ENCODE measurements at regions of chr4 and their contacts with region 1.

Region 1: GRCh38 chr4:82648356-82648755 is 86.6 kb upstream of the TMEM150C start:
- DNase-seq: peak; percentile 37
- ATAC-seq: no peak
- H3K4me3 ChIP-seq: no peak overlapping the region
- H3K27ac ChIP-seq: no peak overlapping the region
- H3K4me1 ChIP-seq: peaks cover 5% of the 10 kb centered on the region
- H3K27me3 ChIP-seq: no peaks in the 10 kb centered on the region
- CTCF ChIP-seq: no peak
- POLR2A ChIP-seq: no peak
- RAD21 ChIP-seq: no peak

Region 2: DNA sequence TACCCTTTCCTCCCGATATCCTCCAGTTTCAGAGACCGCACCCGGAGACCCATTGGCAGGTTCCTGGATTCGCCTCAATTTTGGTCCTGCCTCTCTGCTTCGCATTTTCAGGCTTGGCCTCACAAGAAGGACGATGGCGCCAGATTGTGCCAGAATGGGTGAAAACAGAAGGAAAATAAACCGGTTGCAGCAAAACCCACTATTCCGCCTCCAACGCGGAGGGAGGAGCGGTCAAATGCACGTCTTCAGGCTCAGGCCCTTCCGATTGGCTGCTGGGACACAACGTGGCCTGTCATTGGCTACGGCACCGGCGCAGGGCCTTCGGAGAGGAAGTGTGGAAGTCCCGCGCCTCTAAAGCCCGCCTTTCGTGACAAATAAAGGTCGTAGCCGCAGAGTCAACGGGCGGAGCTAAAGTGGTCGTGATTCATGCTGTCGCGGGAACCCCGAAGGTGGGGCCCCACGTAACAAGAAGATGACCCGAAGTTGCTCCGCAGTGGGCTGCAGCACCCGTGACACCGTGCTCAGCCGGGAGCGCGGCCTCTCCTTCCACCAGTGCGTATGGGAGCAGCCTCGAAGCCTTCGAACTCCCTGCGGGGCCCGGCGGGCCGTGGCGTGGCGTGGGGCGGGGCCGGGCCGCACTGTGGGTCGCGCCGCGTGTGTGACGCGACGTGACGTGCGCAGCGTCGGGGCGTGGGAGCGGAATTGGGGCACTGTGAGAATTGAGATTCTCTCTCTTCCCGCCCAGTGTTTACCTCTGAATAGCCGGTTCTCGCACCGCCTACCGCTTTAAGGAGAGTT is 252.2 kb after region 1 on chr4 and contains the start of gene THAP9:
- CTCF ChIA-PET with region 1: interaction called, 11 read pairs
- POLR2A ChIA-PET with region 1: no interaction called
- dilution Hi-C with region 1: no loop called
- in situ Hi-C with region 1: no loop called
- intact Hi-C with region 1: no loop called
- DNase-seq: peak; percentile 100
- ATAC-seq: peak; percentile 95
- H3K4me3 ChIP-seq: peak within 1 kb of the TSS; percentile 69
- H3K27ac ChIP-seq: peak within 1 kb of the TSS; percentile 88
- H3K4me1 ChIP-seq: no peaks in the 10 kb centered on the region
- H3K27me3 ChIP-seq: no peaks in the 10 kb centered on the region
- CTCF ChIP-seq: no peak
- POLR2A ChIP-seq: peak; percentile 96
- RAD21 ChIP-seq: no peak
- total RNA-seq, gene THAP9: 2.9 and 4.2 TPM in 2 replicates

Region 3: DNA sequence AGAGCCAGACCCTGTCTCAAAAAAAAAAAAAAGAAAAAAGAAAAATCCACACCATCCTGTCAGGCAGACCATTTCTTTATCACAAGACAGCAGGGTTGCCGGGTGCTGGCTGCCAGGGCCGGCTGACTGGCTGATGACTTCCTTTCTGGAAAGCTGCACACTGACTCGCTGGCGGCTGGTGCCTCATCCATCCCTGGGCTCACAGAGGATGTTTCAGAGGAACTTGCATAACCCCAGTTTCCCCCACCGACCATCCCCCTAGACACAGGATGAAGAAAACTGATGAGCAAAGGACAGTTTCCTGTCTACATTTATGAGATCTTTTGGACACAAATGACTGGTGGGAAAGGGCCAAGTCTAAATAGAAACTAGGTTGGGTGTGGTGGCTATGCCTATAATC is 672.2 kb after region 1 on chr4:
- CTCF ChIA-PET with region 1: no interaction called
- POLR2A ChIA-PET with region 1: no interaction called
- dilution Hi-C with region 1: no loop called
- in situ Hi-C with region 1: no loop called
- intact Hi-C with region 1: no loop called
- DNase-seq: peak; percentile 45
- ATAC-seq: peak; percentile 29; the same call in 1 of the 2 replicates
- H3K4me3 ChIP-seq: no peak overlapping the region
- H3K27ac ChIP-seq: no peak overlapping the region
- H3K4me1 ChIP-seq: no peaks in the 10 kb centered on the region
- H3K27me3 ChIP-seq: peaks cover 4% of the 10 kb centered on the region
- CTCF ChIP-seq: no peak
- POLR2A ChIP-seq: no peak
- RAD21 ChIP-seq: no peak

Measured in IMR-90 (cell line).